A673 (cell line): ENCODE measurements at regions of chr1 and their contacts with region 1.

Region 1: DNA sequence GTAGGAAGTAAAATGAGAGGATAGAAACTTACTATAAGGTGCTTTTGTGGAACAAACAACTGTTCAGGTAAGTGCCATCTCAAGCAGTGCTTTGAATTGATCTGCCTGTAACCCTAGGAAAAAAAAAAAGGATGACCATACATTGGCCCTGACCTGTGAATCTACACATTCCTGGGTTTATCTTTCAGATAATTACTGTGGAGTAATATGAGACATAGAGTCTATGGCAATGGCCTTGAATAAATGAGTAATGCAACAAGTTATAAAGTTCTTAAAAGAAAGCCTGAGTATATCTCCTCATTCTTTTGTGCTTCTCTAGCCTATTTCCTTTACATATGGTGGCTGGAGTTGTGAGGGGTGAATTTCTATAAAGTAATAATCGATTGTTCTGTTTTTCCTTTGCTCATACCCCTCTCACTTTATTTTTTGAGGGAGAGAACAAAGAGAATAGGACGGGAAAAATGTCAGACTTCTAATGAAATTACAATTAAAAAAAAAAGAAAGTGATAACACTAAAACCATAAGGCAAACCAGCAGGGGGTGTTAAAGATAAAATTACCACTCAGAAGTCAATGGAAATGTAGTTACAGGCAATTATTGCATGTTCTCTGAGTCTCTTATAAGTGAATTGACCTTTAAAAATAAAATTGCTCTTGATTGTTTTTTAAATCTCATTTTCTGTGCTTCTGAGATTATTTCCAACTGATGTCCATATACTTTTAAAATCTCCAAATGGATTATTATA is 12.4 kb upstream of the ATP1A1 start:
- DNase-seq: peak; percentile 60
- H3K4me3 ChIP-seq: no peak overlapping the region
- H3K27ac ChIP-seq: peak overlapping the region; percentile 100
- H3K4me1 ChIP-seq: peaks cover 80% of the 10 kb centered on the region
- H3K27me3 ChIP-seq: no peaks in the 10 kb centered on the region
- CTCF ChIP-seq: peak; percentile 40; the same call in 1 of the 2 replicates

Region 2: GRCh38 chr1:116075577-116076380 is 284.8 kb before region 1 on chr1:
- CTCF ChIA-PET with region 1: interaction called, 3 read pairs
- POLR2A ChIA-PET with region 1: no interaction called
- intact Hi-C with region 1: loop called (anchors 1 kb)
- DNase-seq: no peak
- H3K4me3 ChIP-seq: no peak overlapping the region
- H3K27ac ChIP-seq: no peak overlapping the region
- H3K4me1 ChIP-seq: peaks cover 18% of the 10 kb centered on the region
- H3K27me3 ChIP-seq: no peaks in the 10 kb centered on the region
- CTCF ChIP-seq: no peak

Region 3: DNA sequence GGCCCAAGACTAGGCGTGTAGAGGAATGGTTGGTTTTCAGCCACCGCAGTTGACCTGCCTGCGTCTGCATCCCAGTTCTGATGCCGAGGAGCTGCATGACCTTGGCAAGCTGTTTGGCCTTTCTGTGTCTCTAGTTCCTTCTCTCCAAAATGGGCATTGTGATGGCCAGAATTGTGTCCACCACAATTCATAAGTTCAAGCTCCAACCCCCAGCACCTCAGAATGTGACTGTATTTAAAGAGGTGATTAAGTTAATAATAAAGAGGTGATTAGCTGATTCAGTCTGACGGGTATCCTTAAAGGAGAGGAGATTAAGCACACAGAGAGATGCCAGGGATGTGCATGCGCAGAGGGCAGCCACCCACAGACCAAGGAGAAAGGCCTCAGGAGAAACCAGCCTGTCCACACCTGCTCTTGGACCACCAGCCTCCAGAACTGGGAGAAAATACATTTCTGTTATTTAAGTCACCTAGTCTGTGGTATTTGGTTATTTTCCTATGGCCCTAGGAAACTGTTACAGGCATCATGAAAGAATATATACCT is 220.9 kb before region 1 on chr1:
- CTCF ChIA-PET with region 1: interaction called, 9 read pairs
- POLR2A ChIA-PET with region 1: no interaction called
- intact Hi-C with region 1: loop called (anchors 2 kb)
- DNase-seq: no peak
- H3K4me3 ChIP-seq: no peak overlapping the region
- H3K27ac ChIP-seq: peak overlapping the region; percentile 54
- H3K4me1 ChIP-seq: peaks cover 8% of the 10 kb centered on the region
- H3K27me3 ChIP-seq: no peaks in the 10 kb centered on the region
- CTCF ChIP-seq: no peak

Region 4: GRCh38 chr1:116151739-116152576 is 208.6 kb before region 1 on chr1:
- CTCF ChIA-PET with region 1: no interaction called
- POLR2A ChIA-PET with region 1: no interaction called
- intact Hi-C with region 1: loop called (anchors 2 kb)
- DNase-seq: peak; percentile 93
- H3K4me3 ChIP-seq: peak overlapping the region; percentile 40
- H3K27ac ChIP-seq: peak overlapping the region; percentile 86
- H3K4me1 ChIP-seq: peaks cover 20% of the 10 kb centered on the region
- H3K27me3 ChIP-seq: no peaks in the 10 kb centered on the region
- CTCF ChIP-seq: peak; percentile 91

Region 5: GRCh38 chr1:116372587-116373444 is 12.2 kb after region 1 on chr1 and contains the start of gene ATP1A1:
- CTCF ChIA-PET with region 1: no interaction called
- POLR2A ChIA-PET with region 1: interaction called, 8 read pairs
- intact Hi-C with region 1: loop called (anchors 2 kb)
- DNase-seq: peak; percentile 97
- H3K4me3 ChIP-seq: peak within 1 kb of the TSS; percentile 91
- H3K27ac ChIP-seq: peak within 1 kb of the TSS; percentile 97
- H3K4me1 ChIP-seq: peaks cover 48% of the 10 kb centered on the region
- H3K27me3 ChIP-seq: no peaks in the 10 kb centered on the region
- CTCF ChIP-seq: no peak; the same call in 1 of the 2 replicates
- total RNA-seq, gene ATP1A1: 1,293 and 1,420 TPM in 2 replicates

Region 6: GRCh38 chr1:116377541-116378529 is 17.2 kb after region 1 on chr1:
- CTCF ChIA-PET with region 1: no interaction called
- POLR2A ChIA-PET with region 1: interaction called, 21 read pairs
- intact Hi-C with region 1: loop called (anchors 2 kb)
- DNase-seq: peak; percentile 75
- H3K4me3 ChIP-seq: peak overlapping the region; percentile 91
- H3K27ac ChIP-seq: peak overlapping the region; percentile 97
- H3K4me1 ChIP-seq: peaks cover 62% of the 10 kb centered on the region
- H3K27me3 ChIP-seq: no peaks in the 10 kb centered on the region
- CTCF ChIP-seq: no peak

Region 7: GRCh38 chr1:116390195-116390594 is 29.6 kb after region 1 on chr1:
- CTCF ChIA-PET with region 1: no interaction called
- POLR2A ChIA-PET with region 1: no interaction called
- intact Hi-C with region 1: no loop called
- DNase-seq: no peak
- H3K4me3 ChIP-seq: no peak overlapping the region
- H3K27ac ChIP-seq: peak overlapping the region; percentile 55
- H3K4me1 ChIP-seq: peaks cover 60% of the 10 kb centered on the region
- H3K27me3 ChIP-seq: no peaks in the 10 kb centered on the region
- CTCF ChIP-seq: no peak